ENCODE measurements at regions of chr10 and their contacts with region 1.

Region 1: DNA sequence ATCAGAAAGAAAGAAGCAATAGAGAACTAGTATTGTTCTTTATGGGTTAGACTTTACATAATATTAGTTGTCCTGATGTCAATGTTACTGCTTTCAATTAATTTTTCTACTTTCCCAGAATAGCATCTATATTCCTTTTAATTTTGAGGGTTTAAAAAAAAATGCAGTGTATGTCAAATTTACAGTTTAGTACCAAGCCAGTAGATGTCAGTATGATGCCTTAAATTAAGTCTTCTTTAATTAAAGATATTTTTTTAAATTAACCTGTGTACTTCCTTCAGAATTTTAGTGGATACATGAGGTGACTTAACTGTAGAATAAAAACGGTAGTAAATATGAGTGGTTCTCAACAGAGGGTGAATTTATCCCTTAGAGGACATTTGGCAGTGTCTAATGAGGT is 35.2 kb upstream of the STOX1 start:
- DNase-seq: no peak
- ATAC-seq: no peak

Region 2: GRCh38 chr10:68897336-68897741 is 105.2 kb after region 1 on chr10:
- intact Hi-C with region 1: loop called in 1 of 2 experiments (anchors 10 kb)
- DNase-seq: peak in 1 of 2 donors; percentile 39
- ATAC-seq: peak; percentile 30

Region 3: GRCh38 chr10:68924593-68924992 is 132.5 kb after region 1 on chr10:
- intact Hi-C with region 1: no loop called
- DNase-seq: no peak
- ATAC-seq: no peak

Measured in left colon (tissue), 2 donors.